ENCODE measurements at regions of chr13 and their contacts with region 1.

Region 1: DNA sequence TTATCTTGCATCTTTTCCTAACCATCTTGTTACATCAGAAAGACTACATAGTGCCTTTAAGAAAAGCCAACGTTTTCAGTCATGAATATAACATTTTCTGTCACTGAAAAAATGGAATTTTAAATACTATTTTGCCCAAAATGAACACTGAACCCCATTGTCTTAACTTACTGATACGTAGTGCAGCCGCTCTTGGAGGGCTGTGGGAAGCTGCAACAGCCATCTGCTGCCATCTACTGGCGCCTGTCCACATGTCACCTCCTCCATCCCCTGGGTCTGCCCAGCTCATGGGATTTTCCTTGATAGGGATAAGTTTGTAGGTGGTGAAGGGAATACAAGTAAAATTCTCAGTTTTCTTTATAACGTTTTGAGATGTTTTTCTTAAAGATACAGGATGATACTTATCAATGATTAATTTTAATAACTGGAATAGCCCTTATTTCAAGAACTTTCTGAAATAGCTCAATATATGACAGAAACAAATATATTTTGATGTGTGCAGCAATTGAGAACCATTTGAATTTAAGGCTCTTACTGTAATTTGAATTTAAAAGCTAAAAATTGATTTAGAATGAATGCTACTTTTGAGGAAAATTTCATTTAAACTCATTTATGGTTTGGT is 73.7 kb downstream of the GGACT start:
- DNase-seq: peak; percentile 67 to 91 (median 84)
- H3K4me3 ChIP-seq: no peak overlapping the region
- H3K27ac ChIP-seq: no peak overlapping the region
- H3K4me1 ChIP-seq: peaks cover 0 to 6% of the 10 kb centered on the region in 2 donors
- H3K27me3 ChIP-seq: no peaks in the 10 kb centered on the region
- CTCF ChIP-seq: peak; percentile 68 to 97 (median 90)
- POLR2A ChIP-seq: no peak

Region 2: DNA sequence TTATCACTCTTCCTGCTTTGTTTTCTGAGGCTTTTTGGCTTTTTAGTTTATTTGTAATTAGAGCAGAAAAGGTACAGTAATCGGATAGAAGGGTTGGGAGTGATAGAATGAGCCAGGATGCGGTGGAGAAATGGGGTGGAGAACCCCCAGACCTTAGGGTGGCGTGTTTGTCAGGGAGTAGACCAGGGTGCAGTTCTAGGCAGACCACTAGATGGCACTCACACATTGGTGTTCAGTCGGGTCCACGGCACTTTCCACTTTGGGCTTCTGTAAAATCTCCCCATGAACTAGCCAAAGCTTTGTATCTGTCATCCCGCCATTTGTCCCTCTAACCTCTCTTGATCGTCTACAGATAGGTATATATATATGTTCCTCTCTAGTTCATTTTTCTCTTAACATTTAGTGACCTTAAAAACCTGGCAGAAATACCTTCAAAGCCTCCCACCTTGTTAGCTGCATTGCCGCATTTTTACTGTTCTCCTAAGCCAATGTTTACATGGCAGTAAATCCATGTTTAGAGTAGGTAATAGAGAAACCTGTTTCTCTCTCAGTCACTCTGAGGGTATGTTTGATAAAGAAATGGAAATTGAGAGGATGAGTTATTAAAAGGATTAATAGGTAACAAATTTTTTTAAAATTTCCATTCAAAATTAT is 858.7 kb before region 1 on chr13:
- intact Hi-C with region 1: loop called in 1 of 2 experiments (anchors 10 kb)
- DNase-seq: peak; percentile 65 to 91 (median 83)
- H3K4me3 ChIP-seq: no peak overlapping the region
- H3K27ac ChIP-seq: no peak overlapping the region
- H3K4me1 ChIP-seq: no peaks in the 10 kb centered on the region
- H3K27me3 ChIP-seq: no peaks in the 10 kb centered on the region
- CTCF ChIP-seq: peak; percentile 80 to 93 (median 88)
- POLR2A ChIP-seq: no peak

Region 3: GRCh38 chr13:99916366-99917103 is 598.4 kb before region 1 on chr13:
- intact Hi-C with region 1: loop called in 1 of 2 experiments (anchors 5 kb)
- DNase-seq: peak in 3 of 7 donors; percentile 13 to 27 (median 20)
- H3K4me3 ChIP-seq: no peak overlapping the region
- H3K27ac ChIP-seq: no peak overlapping the region
- H3K4me1 ChIP-seq: no peaks in the 10 kb centered on the region
- H3K27me3 ChIP-seq: peaks cover 16% of the 10 kb centered on the region
- CTCF ChIP-seq: peak; percentile 69 to 98 (median 86)
- POLR2A ChIP-seq: no peak

Region 4: DNA sequence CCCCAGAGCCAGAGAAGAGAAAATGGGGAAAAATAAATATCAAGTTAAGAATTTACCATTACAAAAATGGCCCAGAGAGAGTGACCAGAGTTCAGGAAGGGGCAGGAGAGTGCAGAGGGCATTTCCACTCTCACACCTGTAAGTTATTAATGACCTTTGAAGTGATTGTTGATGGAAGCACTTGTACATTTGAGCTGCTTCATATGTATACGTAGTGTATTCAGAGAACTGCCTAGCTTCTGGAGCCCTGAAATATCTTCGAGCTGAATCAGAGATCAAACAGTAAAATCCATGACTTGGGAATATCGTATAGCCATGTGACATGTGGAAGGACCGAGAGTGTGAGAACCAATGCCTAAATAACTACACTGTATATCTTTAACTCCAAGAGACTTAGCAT is 475.2 kb before region 1 on chr13:
- intact Hi-C with region 1: loop called in 1 of 2 experiments (anchors 10 kb)
- DNase-seq: no peak
- H3K4me3 ChIP-seq: no peak overlapping the region
- H3K27ac ChIP-seq: no peak overlapping the region
- H3K4me1 ChIP-seq: no peaks in the 10 kb centered on the region
- H3K27me3 ChIP-seq: no peaks in the 10 kb centered on the region
- CTCF ChIP-seq: no peak
- POLR2A ChIP-seq: no peak

Region 5: GRCh38 chr13:100235311-100235901 is 279.5 kb before region 1 on chr13:
- intact Hi-C with region 1: loop called in 1 of 2 experiments (anchors 10 kb)
- DNase-seq: peak in 3 of 7 donors; percentile 16 to 35 (median 18)
- H3K4me3 ChIP-seq: no peak overlapping the region
- H3K27ac ChIP-seq: no peak overlapping the region
- H3K4me1 ChIP-seq: peaks cover 0 to 14% of the 10 kb centered on the region in 2 donors
- H3K27me3 ChIP-seq: no peaks in the 10 kb centered on the region
- CTCF ChIP-seq: peak; percentile 40 to 91 (median 64)
- POLR2A ChIP-seq: no peak

Region 6: GRCh38 chr13:100440751-100441425 is 74.0 kb before region 1 on chr13:
- intact Hi-C with region 1: no loop called
- DNase-seq: no peak
- H3K4me3 ChIP-seq: no peak overlapping the region
- H3K27ac ChIP-seq: no peak overlapping the region
- H3K4me1 ChIP-seq: no peaks in the 10 kb centered on the region
- H3K27me3 ChIP-seq: no peaks in the 10 kb centered on the region
- CTCF ChIP-seq: no peak
- POLR2A ChIP-seq: no peak

Region 7: GRCh38 chr13:100789481-100789880 is 274.6 kb after region 1 on chr13:
- intact Hi-C with region 1: no loop called
- DNase-seq: peak in 1 of 7 donors; percentile 1
- H3K4me3 ChIP-seq: no peak overlapping the region
- H3K27ac ChIP-seq: no peak overlapping the region
- H3K4me1 ChIP-seq: no peaks in the 10 kb centered on the region
- H3K27me3 ChIP-seq: no peaks in the 10 kb centered on the region
- CTCF ChIP-seq: no peak
- POLR2A ChIP-seq: no peak

Region 8: GRCh38 chr13:100887729-100888156 is 372.8 kb after region 1 on chr13:
- intact Hi-C with region 1: no loop called
- DNase-seq: peak in 5 of 7 donors; percentile 8 to 62 (median 30)
- H3K4me3 ChIP-seq: no peak overlapping the region
- H3K27ac ChIP-seq: no peak overlapping the region
- H3K4me1 ChIP-seq: no peaks in the 10 kb centered on the region
- H3K27me3 ChIP-seq: no peaks in the 10 kb centered on the region
- CTCF ChIP-seq: no peak
- POLR2A ChIP-seq: no peak

Measured in adrenal gland (tissue), 19 donors.